ENCODE measurements at regions of chr10 and their contacts with region 1.

Region 1: GRCh38 chr10:119596537-119597404 is at the start of gene TIAL1:
- DNase-seq: peak; percentile 98 to 99
- H3K4me3 ChIP-seq: peak within 1 kb of the TSS; percentile 98
- H3K4me3 Mint-ChIP-seq: peak within 1 kb of the TSS; percentile 92
- H3K27ac Mint-ChIP-seq: peak within 1 kb of the TSS; percentile 94
- H3K4me1 ChIP-seq: peaks cover 38% of the 10 kb centered on the region
- H3K4me1 Mint-ChIP-seq: peaks cover 23% of the 10 kb centered on the region
- H3K27me3 ChIP-seq: no peaks in the 10 kb centered on the region
- H3K27me3 Mint-ChIP-seq: no peaks in the 10 kb centered on the region
- CTCF ChIP-seq: no peak
- total RNA-seq, gene TIAL1: 162 and 174 TPM in 2 replicates

Region 2: DNA sequence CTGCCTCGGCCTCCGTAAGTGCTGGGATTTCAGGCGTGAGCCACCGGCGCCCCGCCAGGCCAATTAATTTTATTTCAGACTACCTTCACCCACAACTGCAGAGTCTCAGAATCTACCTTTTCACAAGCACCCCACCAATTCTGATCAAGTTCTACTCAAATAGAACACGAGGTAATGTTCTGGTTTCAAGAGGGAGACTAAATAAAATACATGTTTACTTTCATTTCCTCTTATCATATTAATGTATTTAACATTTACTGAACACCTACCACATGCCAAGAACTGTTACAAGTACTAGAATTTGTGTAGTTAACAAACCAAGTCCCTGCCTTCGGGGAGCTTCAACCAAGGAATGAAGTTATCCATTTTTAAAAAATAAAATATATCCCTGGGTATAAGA is 28.8 kb before region 1 on chr10:
- CTCF ChIA-PET with region 1: no interaction called
- POLR2A ChIA-PET with region 1: no interaction called
- intact Hi-C with region 1: no loop called
- DNase-seq: no peak
- H3K4me3 ChIP-seq: no peak overlapping the region
- H3K4me3 Mint-ChIP-seq: no peak overlapping the region
- H3K27ac Mint-ChIP-seq: no peak overlapping the region
- H3K4me1 ChIP-seq: no peaks in the 10 kb centered on the region
- H3K4me1 Mint-ChIP-seq: no peaks in the 10 kb centered on the region
- H3K27me3 ChIP-seq: no peaks in the 10 kb centered on the region
- H3K27me3 Mint-ChIP-seq: no peaks in the 10 kb centered on the region
- CTCF ChIP-seq: no peak

Region 3: GRCh38 chr10:119650692-119651513 is 54.1 kb after region 1 on chr10 and contains the start of gene BAG3:
- CTCF ChIA-PET with region 1: no interaction called
- POLR2A ChIA-PET with region 1: interaction called, 11 read pairs
- intact Hi-C with region 1: no loop called
- DNase-seq: peak; percentile 90
- H3K4me3 ChIP-seq: peak within 1 kb of the TSS; percentile 78
- H3K4me3 Mint-ChIP-seq: peak within 1 kb of the TSS; percentile 90
- H3K27ac Mint-ChIP-seq: peak within 1 kb of the TSS; percentile 89
- H3K4me1 ChIP-seq: peaks cover 13% of the 10 kb centered on the region
- H3K4me1 Mint-ChIP-seq: peaks cover 13% of the 10 kb centered on the region
- H3K27me3 ChIP-seq: no peaks in the 10 kb centered on the region
- H3K27me3 Mint-ChIP-seq: no peaks in the 10 kb centered on the region
- CTCF ChIP-seq: no peak
- total RNA-seq, gene BAG3: 30.7 and 31.6 TPM in 2 replicates

Region 4: GRCh38 chr10:119872860-119873681 is 276.3 kb after region 1 on chr10:
- CTCF ChIA-PET with region 1: no interaction called
- POLR2A ChIA-PET with region 1: no interaction called
- intact Hi-C with region 1: loop called (anchors 10 kb)
- DNase-seq: peak; percentile 84 to 90
- H3K4me3 ChIP-seq: peak overlapping the region; percentile 56
- H3K4me3 Mint-ChIP-seq: peak overlapping the region; percentile 88
- H3K27ac Mint-ChIP-seq: peak overlapping the region; percentile 83
- H3K4me1 ChIP-seq: peaks cover 14% of the 10 kb centered on the region
- H3K4me1 Mint-ChIP-seq: peaks cover 16% of the 10 kb centered on the region
- H3K27me3 ChIP-seq: no peaks in the 10 kb centered on the region
- H3K27me3 Mint-ChIP-seq: no peaks in the 10 kb centered on the region
- CTCF ChIP-seq: no peak

Region 5: GRCh38 chr10:119892188-119893065 is 295.7 kb after region 1 on chr10 and contains the start of gene SEC23IP:
- CTCF ChIA-PET with region 1: no interaction called
- POLR2A ChIA-PET with region 1: no interaction called
- intact Hi-C with region 1: loop called (anchors 1 kb)
- DNase-seq: peak; percentile 95 to 96
- H3K4me3 ChIP-seq: peak within 1 kb of the TSS; percentile 93
- H3K4me3 Mint-ChIP-seq: peak within 1 kb of the TSS; percentile 79
- H3K27ac Mint-ChIP-seq: peak within 1 kb of the TSS; percentile 76
- H3K4me1 ChIP-seq: peaks cover 31% of the 10 kb centered on the region
- H3K4me1 Mint-ChIP-seq: peaks cover 38% of the 10 kb centered on the region
- H3K27me3 ChIP-seq: no peaks in the 10 kb centered on the region
- H3K27me3 Mint-ChIP-seq: no peaks in the 10 kb centered on the region
- CTCF ChIP-seq: no peak
- total RNA-seq, gene SEC23IP: 108 and 116 TPM in 2 replicates